AG04449 (cell line): ENCODE measurements at regions of chr2 and their contacts with region 1.

Region 1: GRCh38 chr2:58448065-58448507 is 207.0 kb upstream of the FANCL start:
- DNase-seq: no peak
- H3K4me3 ChIP-seq: no peak overlapping the region
- CTCF ChIP-seq: peak; percentile 80

Region 2: GRCh38 chr2:57759822-57760300 is 688.2 kb before region 1 on chr2:
- CTCF ChIA-PET with region 1: interaction called, 31 read pairs
- POLR2A ChIA-PET with region 1: no interaction called
- DNase-seq: peak; percentile 17
- H3K4me3 ChIP-seq: peak overlapping the region; percentile 51
- CTCF ChIP-seq: peak; percentile 96

Region 3: DNA sequence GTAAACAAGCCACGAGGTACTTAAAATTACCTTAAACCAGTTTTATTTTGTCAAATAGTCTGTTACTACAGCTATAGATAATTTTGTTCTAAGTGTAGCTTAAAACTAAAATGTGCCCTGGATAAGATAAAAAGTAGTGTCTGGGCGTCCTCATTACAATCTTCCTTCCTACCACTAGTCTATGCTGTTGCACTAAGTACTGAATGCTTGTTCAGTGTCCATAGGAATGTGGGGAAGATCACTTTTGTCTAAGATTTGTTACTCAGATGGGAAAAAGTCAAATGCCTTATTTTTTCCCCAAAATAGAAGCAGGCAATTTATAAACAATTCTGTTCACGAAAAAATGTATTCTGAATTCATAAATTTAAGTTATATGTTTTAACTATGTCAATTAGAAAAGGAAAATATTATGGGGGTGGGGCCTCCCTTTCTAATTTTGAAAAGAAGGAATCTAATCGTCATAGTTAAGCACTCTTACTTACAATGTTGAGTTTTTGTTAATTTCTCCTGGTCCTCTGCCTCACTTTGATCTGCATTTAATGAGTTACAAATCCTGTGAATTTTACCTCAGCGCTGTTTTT is 541.8 kb before region 1 on chr2:
- CTCF ChIA-PET with region 1: interaction called, 32 read pairs
- POLR2A ChIA-PET with region 1: no interaction called
- DNase-seq: peak; percentile 12
- H3K4me3 ChIP-seq: no peak overlapping the region
- CTCF ChIP-seq: peak; percentile 80

Region 4: GRCh38 chr2:58131191-58132011 is 316.7 kb before region 1 on chr2:
- CTCF ChIA-PET with region 1: interaction called, 25 read pairs
- POLR2A ChIA-PET with region 1: no interaction called
- DNase-seq: no peak
- H3K4me3 ChIP-seq: no peak overlapping the region
- CTCF ChIP-seq: no peak

Region 5: DNA sequence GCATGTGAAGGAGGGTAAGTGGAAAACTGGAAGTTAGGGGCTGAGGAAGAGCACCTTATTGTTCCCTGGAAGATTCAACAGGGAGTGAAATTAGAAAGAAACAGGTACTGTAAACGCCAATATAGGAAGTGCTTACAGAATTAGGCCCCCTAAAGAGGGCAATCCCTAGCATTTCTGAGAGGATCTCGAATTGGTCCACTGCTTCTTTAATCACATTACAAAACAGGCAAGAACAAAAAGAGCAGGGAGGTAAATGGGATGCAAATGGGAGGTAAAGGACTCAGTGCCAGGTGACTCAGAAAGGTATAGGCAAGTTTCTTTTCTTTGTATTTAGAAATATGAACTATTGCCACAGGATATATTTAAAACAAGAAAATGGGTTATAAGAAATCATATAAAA is 90.6 kb before region 1 on chr2:
- CTCF ChIA-PET with region 1: no interaction called
- POLR2A ChIA-PET with region 1: no interaction called
- DNase-seq: no peak
- H3K4me3 ChIP-seq: no peak overlapping the region
- CTCF ChIP-seq: no peak

Region 6: DNA sequence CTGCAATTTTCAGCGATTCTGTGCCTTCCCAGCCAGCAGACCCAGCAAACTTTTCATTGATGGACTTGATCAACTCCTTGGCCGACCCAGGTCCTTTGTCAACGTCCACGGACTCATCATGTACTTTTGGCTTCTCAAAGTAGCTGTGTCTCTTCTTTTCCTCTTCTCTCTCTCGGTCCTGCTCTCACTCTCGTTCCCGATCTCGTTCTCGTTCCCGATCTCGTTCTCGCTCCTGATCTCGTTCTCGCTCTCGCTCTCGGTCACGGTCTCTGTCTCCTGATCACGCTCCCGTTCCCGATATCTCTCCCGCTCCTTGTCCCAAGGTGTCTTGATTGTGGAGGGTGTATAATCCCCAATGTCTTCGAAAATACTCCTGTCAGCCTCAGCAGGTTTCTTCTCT is 12.6 kb after region 1 on chr2:
- CTCF ChIA-PET with region 1: interaction called, 19 read pairs
- POLR2A ChIA-PET with region 1: no interaction called
- DNase-seq: no peak
- H3K4me3 ChIP-seq: no peak overlapping the region
- CTCF ChIP-seq: no peak